Naive thymus-derived CD8-positive, alpha-beta T cell (primary cell): ENCODE measurements at regions of chr1 and their contacts with region 1.

Region 1: DNA sequence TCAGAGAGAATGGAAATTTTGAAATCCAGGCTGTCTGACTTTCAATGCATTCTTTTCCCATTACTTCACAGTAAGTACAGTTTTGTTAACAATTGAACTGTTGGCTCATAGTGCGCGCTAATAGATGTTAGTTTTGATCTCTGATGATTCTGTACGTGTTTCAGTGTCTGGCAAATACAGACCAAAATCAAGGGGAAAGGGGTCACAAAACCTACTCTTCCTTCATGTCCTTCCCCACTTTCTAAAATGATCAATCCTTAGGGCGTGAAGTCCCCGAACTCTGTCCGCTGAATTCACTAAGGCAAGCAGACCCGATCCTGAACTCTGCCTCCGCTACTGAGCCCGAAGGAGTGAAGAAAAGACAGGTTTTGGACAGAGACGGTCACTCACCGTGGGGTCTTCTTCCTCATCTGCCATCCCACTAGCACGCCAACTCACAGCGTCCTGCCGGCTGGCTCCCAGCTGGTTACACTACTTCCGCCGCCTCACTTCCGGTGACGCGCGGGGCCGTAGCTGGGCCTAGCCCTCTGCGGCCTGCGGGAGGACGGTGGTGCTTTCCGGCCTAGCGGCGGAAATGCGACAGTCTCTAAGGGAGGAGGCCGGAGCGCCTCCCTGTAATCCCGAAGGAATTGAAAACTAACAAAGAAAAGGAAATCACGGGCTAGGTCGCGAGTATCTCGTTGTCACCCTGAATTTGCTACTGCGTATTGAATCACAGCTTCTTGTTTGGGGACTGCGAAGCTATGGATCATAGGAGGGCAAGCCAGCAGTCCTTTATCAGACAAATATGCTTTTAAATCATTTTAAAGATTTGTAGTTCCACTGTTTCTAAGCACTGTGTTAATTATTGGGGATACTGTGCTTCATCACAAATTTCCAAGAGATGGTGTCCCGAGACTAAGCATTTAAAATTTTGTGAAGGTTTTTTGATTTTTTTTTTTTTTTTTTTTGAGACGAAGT is at the start of gene TAF13:
- DNase-seq: peak; percentile 74 to 93 (median 85)
- ATAC-seq: peak; percentile 96 to 98
- H3K4me3 Mint-ChIP-seq: peak within 1 kb of the TSS; percentile 96 to 100 (median 98)
- H3K27ac Mint-ChIP-seq: peak within 1 kb of the TSS; percentile 98 to 100 (median 99)
- H3K4me1 Mint-ChIP-seq: peaks cover 8 to 29% (median 20%) of the 10 kb centered on the region in 4 donors
- H3K27me3 Mint-ChIP-seq: no peaks in the 10 kb centered on the region
- polyA plus RNA-seq, gene TAF13: 1.5 to 1.7 (median 1.7) TPM

Region 2: DNA sequence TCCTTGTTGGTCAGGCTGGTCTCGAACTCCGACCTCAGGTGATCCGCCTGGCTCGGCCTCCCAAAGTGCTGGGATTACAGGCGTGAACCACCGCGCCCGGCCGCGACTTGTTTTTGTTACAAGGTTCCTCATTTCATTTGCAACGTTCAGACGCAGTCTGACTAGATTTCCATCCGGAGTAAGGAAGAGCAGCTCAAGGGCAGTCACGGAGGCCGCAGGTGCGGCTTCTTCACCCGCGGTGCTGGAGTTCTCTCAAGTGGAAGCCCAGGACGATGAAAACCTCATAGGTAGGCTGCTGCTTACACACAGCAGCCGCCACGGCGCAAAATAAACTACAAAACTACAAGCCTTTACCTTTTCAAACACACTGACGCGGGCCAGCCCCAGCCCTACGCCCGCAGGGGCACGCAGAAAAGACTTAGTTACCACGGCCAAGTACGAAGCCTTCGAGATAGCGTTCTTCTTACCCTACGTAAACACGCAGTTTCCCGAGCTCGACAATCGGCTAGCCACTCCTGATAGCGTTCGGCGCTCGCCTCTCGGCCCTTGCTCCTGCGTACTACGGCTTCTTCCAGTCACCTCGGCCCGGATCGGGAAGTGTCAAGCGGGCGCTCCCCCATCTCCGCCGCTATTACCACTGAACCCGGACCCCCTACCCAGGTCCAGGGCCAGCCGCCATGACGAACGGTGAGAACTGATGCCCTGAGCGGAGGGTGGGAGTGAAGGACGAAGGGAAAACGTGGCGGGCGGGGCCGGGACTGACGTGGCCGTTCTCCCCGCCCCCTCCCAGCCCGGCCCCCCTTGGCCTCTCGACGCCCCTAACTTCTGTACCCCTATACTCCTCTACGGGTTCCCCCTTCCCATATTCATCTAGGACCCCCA is 14.6 kb after region 1 on chr1 and contains the start of gene TMEM167B:
- POLR2A ChIA-PET with region 1: interaction called, 46 read pairs
- DNase-seq: peak; percentile 71 to 94 (median 87)
- ATAC-seq: peak; percentile 88 to 93
- H3K4me3 Mint-ChIP-seq: peak within 1 kb of the TSS; percentile 88 to 98 (median 96)
- H3K27ac Mint-ChIP-seq: peak within 1 kb of the TSS; percentile 96 to 99 (median 98)
- H3K4me1 Mint-ChIP-seq: peaks cover 18 to 38% (median 30%) of the 10 kb centered on the region in 4 donors
- H3K27me3 Mint-ChIP-seq: no peaks in the 10 kb centered on the region
- polyA plus RNA-seq, gene TMEM167B: 28.8 to 32.0 (median 29.6) TPM

Region 3: DNA sequence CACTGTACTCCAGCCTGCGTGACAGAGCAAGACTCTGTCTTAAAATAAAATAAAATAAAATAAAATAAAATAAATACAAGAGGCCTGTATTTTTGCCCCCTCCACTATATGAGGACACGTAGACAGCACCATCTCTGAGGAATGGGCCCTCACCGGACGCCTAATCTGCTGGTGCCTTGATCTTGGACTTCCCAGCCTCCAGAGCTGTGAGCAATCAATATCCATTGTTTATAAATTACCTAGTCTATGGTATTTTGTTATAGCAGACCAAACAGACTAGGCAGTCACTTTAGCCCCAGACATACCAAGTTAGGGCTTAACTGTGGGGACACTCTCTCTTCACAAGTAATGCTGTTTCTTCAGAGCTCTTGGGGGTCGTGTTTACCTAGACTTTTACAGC is 44.5 kb after region 1 on chr1:
- POLR2A ChIA-PET with region 1: no interaction called
- DNase-seq: no peak
- ATAC-seq: no peak
- H3K4me3 Mint-ChIP-seq: no peak overlapping the region
- H3K27ac Mint-ChIP-seq: peak overlapping the region in 1 of 10 donors; percentile 40
- H3K4me1 Mint-ChIP-seq: peaks cover 0 to 4% (median 0%) of the 10 kb centered on the region in 4 donors
- H3K27me3 Mint-ChIP-seq: peaks cover 0 to 2% (median 0%) of the 10 kb centered on the region in 5 donors